Heart left ventricle (tissue), 16 donors: ENCODE measurements at regions of chr12 and their contacts with region 1.

Region 1: GRCh38 chr12:89451841-89452251 is 72.8 kb downstream of the GALNT4 start:
- DNase-seq: peak in 4 of 5 donors; percentile 30 to 57 (median 50)
- ATAC-seq: peak; percentile 60 to 78 (median 70)
- H3K4me3 ChIP-seq: peak overlapping the region in 2 of 12 donors; percentile 8 to 14
- H3K27ac ChIP-seq: peak overlapping the region in 10 of 12 donors; percentile 23 to 85 (median 68)
- H3K4me1 ChIP-seq: peaks cover 0 to 45% (median 35%) of the 10 kb centered on the region in 12 donors
- H3K27me3 ChIP-seq: no peaks in the 10 kb centered on the region
- CTCF ChIP-seq: no peak
- POLR2A ChIP-seq: no peak

Region 2: GRCh38 chr12:89384050-89384758 is 67.6 kb before region 1 on chr12:
- intact Hi-C with region 1: loop called in 2 of 10 experiments (anchors 5 to 10 kb)
- DNase-seq: peak in 4 of 5 donors; percentile 42 to 73 (median 56)
- ATAC-seq: peak; percentile 70 to 87 (median 80)
- H3K4me3 ChIP-seq: peak overlapping the region in 3 of 12 donors; percentile 7 to 20 (median 11)
- H3K27ac ChIP-seq: peak overlapping the region; percentile 45 to 77 (median 68)
- H3K4me1 ChIP-seq: peaks cover 0 to 54% (median 35%) of the 10 kb centered on the region in 12 donors
- H3K27me3 ChIP-seq: no peaks in the 10 kb centered on the region
- CTCF ChIP-seq: no peak
- POLR2A ChIP-seq: no peak

Region 3: GRCh38 chr12:89389755-89390661 is 61.8 kb before region 1 on chr12:
- intact Hi-C with region 1: loop called in 3 of 10 experiments (anchors 2 to 10 kb)
- DNase-seq: no peak
- ATAC-seq: peak; percentile 82 to 87 (median 85)
- H3K4me3 ChIP-seq: no peak overlapping the region
- H3K27ac ChIP-seq: peak overlapping the region; percentile 32 to 80 (median 68)
- H3K4me1 ChIP-seq: peaks cover 0 to 64% (median 30%) of the 10 kb centered on the region in 12 donors
- H3K27me3 ChIP-seq: no peaks in the 10 kb centered on the region
- CTCF ChIP-seq: no peak
- POLR2A ChIP-seq: no peak

Region 4: GRCh38 chr12:89421092-89421835 is 30.6 kb before region 1 on chr12:
- intact Hi-C with region 1: no loop called
- DNase-seq: no peak
- ATAC-seq: no peak
- H3K4me3 ChIP-seq: no peak overlapping the region
- H3K27ac ChIP-seq: no peak overlapping the region
- H3K4me1 ChIP-seq: peaks cover 0 to 11% (median 0%) of the 10 kb centered on the region in 12 donors
- H3K27me3 ChIP-seq: no peaks in the 10 kb centered on the region
- CTCF ChIP-seq: peak in 4 of 12 donors; percentile 5 to 24 (median 16)
- POLR2A ChIP-seq: no peak